Heart right ventricle (tissue), 16 donors: ENCODE measurements at regions of chr2 and their contacts with region 1.

Region 1: DNA sequence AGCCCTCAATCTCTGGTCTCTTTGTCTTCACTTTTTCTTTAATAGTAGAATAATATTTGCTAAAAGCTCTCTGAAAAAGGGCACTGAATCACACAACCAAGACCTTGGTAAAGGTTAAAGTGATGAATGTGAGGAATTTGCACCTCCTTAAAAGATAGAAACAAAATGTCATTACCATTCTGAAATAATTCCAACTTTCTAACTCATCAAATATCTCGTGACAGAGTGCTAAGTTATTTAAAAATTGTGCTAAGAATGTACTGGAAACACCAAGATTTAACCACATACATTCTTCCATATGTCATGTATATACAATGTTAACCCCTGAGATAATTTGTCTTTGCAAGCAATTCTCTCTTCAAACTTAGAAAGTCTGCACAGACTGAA is 893.0 kb upstream of the CRIM1 start:
- DNase-seq: no peak
- ATAC-seq: no peak
- H3K4me3 ChIP-seq: no peak overlapping the region
- H3K27ac ChIP-seq: no peak overlapping the region
- H3K4me1 ChIP-seq: no peaks in the 10 kb centered on the region
- H3K27me3 ChIP-seq: no peaks in the 10 kb centered on the region
- CTCF ChIP-seq: no peak

Region 2: GRCh38 chr2:35245508-35245907 is 217.1 kb before region 1 on chr2:
- intact Hi-C with region 1: loop called in 1 of 10 experiments (anchors 10 kb)
- DNase-seq: no peak
- ATAC-seq: no peak
- H3K4me3 ChIP-seq: no peak overlapping the region
- H3K27ac ChIP-seq: no peak overlapping the region
- H3K4me1 ChIP-seq: no peaks in the 10 kb centered on the region
- H3K27me3 ChIP-seq: no peaks in the 10 kb centered on the region
- CTCF ChIP-seq: no peak

Region 3: GRCh38 chr2:35606394-35606793 is 143.8 kb after region 1 on chr2:
- intact Hi-C with region 1: no loop called
- DNase-seq: no peak
- ATAC-seq: no peak
- H3K4me3 ChIP-seq: no peak overlapping the region
- H3K27ac ChIP-seq: no peak overlapping the region
- H3K4me1 ChIP-seq: no peaks in the 10 kb centered on the region
- H3K27me3 ChIP-seq: no peaks in the 10 kb centered on the region
- CTCF ChIP-seq: no peak